ENCODE measurements at regions of chr1 and their contacts with region 1.

Region 1: DNA sequence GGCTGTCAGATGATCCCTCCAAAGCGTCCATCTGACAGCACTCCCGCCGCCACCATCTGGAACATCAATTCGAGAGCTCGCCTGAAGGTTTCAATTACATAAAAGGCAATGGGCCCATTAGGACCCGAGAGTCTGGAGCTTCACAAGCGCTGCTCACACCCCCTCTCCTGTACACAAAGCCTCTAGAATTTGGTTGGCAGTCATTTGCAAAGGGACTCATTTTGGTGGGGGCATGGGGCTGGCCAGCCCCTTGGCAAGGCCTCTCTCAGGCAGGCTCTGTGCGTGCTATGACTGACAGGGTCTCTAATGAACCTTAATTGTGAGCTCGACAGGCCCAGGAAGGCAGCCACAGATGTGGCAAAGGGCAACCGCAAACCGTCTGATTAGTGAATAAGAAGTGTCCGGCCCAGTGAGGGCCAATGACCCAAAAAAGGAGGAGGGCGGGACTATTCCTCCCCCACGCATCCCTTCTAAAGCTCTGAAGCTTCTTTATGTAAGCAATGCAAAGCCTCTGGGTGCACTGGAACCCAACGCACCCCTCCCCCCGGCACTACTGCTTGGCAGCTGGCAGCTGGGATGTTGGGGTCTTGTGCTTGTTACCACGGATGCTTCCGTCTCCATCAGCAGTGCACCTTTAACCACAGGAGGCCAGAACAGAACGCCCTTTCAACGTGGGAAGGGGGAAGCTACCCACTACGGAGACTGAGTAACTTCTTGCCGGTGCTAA is 79.4 kb downstream of the CAPZB start:
- DNase-seq: no peak
- CTCF ChIP-seq: no peak

Region 2: GRCh38 chr1:19390901-19391595 is 14.9 kb before region 1 on chr1:
- CTCF ChIA-PET with region 1: interaction called, 27 read pairs
- POLR2A ChIA-PET with region 1: no interaction called
- DNase-seq: peak; percentile 77
- CTCF ChIP-seq: peak; percentile 72